AG04449 (cell line): ENCODE measurements at regions of chr7 and their contacts with region 1.

Region 1: GRCh38 chr7:36318116-36318515 is 71.5 kb upstream of the ANLN start:
- DNase-seq: no peak
- H3K4me3 ChIP-seq: no peak overlapping the region
- CTCF ChIP-seq: no peak

Region 2: DNA sequence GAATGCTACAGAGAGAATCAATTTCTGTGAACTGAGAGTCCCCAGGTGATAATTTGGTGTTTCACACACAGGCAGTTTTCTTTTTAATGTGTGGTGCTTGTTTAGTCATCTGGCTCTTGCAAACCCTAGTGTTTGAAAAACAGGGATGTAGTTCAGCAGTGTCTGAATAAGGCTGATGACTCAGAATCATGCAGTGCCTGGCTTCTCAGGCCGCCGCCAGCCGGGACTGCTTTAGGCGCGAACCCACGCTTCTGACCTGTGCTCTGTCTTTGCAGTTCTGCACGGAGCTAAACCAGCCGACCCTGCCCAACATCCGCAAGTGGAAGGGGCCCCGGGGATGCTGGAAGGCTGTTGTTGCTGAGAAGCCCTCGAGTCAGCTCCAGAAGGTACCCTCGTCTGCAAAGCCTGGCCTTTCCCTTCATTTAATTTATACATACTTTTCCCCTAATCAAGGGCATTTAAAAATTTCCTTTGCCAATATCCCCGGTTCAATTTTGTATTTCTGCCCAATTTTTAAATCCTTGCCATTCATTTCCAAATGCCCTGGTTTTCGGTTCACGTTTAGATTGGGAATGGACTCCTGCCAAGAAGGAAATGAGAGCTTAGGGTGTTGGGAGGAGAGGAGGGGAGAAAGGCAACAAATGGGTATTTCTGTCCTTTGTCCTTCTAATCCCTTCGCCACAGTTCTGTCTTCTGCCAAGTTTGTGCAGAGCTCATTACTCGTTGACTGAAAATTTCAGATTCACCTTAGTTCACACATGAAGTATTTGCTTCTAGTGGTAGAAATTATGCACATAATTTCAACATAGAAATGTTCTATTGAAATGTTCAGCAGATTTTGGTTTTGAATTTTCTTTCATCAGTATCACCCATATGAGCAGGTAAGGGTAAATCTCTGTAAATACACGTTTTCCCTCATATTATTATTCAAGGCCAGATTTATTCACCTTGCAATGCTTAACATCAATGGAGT is 37.0 kb before region 1 on chr7:
- CTCF ChIA-PET with region 1: interaction called, 23 read pairs
- POLR2A ChIA-PET with region 1: no interaction called
- DNase-seq: peak; percentile 52
- H3K4me3 ChIP-seq: peak overlapping the region; percentile 34
- CTCF ChIP-seq: no peak

Region 3: GRCh38 chr7:36303202-36304098 is 14.7 kb before region 1 on chr7:
- CTCF ChIA-PET with region 1: interaction called, 97 read pairs
- POLR2A ChIA-PET with region 1: no interaction called
- DNase-seq: peak; percentile 75
- H3K4me3 ChIP-seq: no peak overlapping the region
- CTCF ChIP-seq: no peak

Region 4: DNA sequence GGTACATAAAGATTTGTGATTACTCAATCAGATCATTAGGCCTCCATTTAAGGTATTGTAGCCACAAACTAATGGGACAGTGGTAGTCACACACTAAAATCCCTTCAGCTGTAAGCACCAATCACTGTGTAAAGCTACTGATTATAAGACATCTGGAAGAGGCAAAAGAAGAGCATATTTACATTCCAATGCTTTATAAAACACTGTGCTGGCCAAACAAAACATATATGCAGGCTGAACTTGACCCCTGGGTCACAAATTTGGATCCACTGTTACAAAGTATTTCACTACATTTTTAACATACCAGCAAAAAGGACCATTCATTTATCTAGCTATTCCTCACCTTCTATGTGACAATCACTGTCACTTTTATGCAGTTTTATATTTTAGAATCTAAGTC is 30.1 kb after region 1 on chr7:
- CTCF ChIA-PET with region 1: interaction called, 17 read pairs
- POLR2A ChIA-PET with region 1: no interaction called
- DNase-seq: peak; percentile 69
- H3K4me3 ChIP-seq: no peak overlapping the region
- CTCF ChIP-seq: no peak